ENCODE measurements at regions of chr14 and their contacts with region 1.

Region 1: GRCh38 chr14:70816525-70816924 is 7.2 kb upstream of the MAP3K9 start:
- DNase-seq: no peak
- H3K4me3 ChIP-seq: no peak overlapping the region
- H3K27ac ChIP-seq: no peak overlapping the region
- H3K27me3 ChIP-seq: peaks cover 10% of the 10 kb centered on the region
- CTCF ChIP-seq: no peak

Region 2: DNA sequence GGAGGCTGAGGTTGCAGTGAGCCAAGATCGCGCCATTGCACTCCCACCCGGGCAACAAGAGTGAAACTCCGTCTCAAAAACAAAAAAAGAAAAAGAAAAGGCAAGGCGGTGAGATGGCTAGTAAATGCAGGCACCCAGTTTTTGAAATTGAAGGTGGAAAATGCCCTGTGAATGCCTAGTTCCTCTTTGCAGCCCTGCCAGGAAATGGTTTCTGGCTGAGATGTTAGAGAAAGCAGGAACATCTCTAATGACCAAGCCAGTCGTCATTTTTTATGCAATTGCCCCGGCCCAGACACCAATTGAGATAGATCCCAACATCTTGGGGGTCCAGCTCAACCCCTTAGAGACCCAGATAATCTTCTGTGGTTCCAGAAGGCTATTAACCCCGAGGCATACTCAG is 644.8 kb before region 1 on chr14:
- CTCF ChIA-PET with region 1: no interaction called
- POLR2A ChIA-PET with region 1: no interaction called
- DNase-seq: no peak
- H3K4me3 ChIP-seq: no peak overlapping the region
- H3K27ac ChIP-seq: no peak overlapping the region
- H3K27me3 ChIP-seq: no peaks in the 10 kb centered on the region
- CTCF ChIP-seq: no peak

Region 3: DNA sequence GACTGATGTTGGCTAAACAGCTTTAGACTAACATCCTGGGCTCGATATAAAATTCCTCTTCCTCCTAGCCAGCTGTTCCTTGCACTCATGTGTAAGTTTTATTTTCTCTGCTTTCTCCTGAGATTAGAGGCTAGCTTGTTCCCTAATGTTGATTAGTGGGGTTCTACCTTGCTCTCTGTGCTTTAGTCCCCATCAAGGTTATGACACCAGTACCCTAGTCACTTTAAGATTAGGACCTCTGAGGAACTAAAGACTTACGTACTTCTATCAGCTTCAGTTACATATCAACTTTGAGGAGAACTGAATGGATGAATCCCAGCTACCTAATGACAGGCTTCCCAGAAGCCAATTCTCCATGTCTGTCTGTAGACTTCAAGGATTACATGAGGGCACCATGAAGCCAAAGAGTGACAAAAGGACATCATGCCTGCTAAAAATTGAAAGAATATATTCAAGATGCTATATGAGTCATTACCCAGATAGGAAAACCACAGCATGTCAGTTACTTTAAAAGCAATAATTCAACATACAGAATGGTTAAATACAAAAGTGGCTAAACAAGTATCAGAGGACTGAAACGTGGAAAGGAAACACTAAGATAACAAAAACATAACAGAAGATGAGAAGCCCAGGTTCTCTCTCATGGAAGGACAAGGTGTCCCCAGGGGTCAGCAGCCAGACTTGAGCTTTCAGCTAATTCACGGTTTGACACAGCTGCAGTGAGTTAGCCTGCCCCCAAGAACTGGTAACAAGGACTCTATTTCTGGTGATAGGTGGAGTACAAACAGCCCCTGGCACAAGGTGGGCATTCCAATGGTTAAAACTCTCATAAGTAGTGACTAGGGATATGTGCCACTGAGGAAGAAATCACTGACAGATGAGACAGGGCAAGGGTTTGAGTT is 302.1 kb before region 1 on chr14:
- CTCF ChIA-PET with region 1: no interaction called
- POLR2A ChIA-PET with region 1: no interaction called
- DNase-seq: no peak
- H3K4me3 ChIP-seq: no peak overlapping the region
- H3K27ac ChIP-seq: no peak overlapping the region
- H3K27me3 ChIP-seq: no peaks in the 10 kb centered on the region
- CTCF ChIP-seq: no peak

Region 4: GRCh38 chr14:70897464-70897863 is 80.9 kb after region 1 on chr14:
- CTCF ChIA-PET with region 1: interaction called, 15 read pairs
- POLR2A ChIA-PET with region 1: no interaction called
- DNase-seq: peak; percentile 67
- H3K4me3 ChIP-seq: peak overlapping the region; percentile 14; the same call in 1 of the 2 replicates
- H3K27ac ChIP-seq: peak overlapping the region; percentile 73
- H3K27me3 ChIP-seq: no peaks in the 10 kb centered on the region
- CTCF ChIP-seq: no peak

Region 5: GRCh38 chr14:70955543-70956480 is 139.3 kb after region 1 on chr14:
- CTCF ChIA-PET with region 1: interaction called, 25 read pairs
- POLR2A ChIA-PET with region 1: no interaction called
- DNase-seq: peak; percentile 7
- H3K4me3 ChIP-seq: no peak overlapping the region
- H3K27ac ChIP-seq: no peak overlapping the region
- H3K27me3 ChIP-seq: no peaks in the 10 kb centered on the region
- CTCF ChIP-seq: peak; percentile 78

Region 6: DNA sequence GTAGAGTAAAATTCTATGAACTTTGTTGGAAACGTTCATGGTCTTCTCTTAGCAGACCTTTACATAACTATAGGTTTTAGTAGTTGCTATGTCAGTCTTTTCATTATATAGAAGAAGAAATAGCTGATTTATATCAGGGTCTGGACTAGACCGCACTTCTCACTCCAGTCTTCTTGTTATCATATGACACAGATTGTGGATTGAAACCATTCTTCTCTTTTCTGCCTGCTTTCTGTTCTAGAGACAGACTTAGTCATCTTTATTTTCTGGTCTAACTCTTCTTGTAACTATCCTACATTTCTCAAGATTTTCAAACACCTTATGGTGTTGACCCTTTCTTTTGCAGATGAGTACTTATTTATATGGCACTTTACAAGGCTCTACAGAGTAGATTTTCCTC is 146.4 kb after region 1 on chr14:
- CTCF ChIA-PET with region 1: interaction called, 15 read pairs
- POLR2A ChIA-PET with region 1: no interaction called
- DNase-seq: no peak
- H3K4me3 ChIP-seq: no peak overlapping the region
- H3K27ac ChIP-seq: no peak overlapping the region
- H3K27me3 ChIP-seq: no peaks in the 10 kb centered on the region
- CTCF ChIP-seq: no peak

Region 7: DNA sequence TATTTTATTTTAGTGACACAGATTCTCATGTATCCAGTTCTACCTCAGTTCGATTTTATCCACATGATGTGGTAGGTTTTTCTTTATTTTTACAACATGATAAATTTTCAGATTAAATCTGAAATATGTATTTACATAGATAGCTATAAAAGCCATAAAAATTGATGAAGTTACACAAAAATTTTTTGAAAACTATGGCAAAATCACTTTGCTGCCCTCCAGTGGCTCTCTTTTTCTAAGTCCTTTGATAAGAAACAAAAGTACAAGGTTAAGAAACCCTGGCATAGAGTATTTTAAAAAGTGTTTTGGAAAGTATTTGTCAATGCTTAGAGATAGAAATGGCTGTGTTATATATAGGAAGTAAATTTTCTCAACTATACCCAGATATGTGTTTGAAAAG is 195.0 kb after region 1 on chr14:
- CTCF ChIA-PET with region 1: interaction called, 19 read pairs
- POLR2A ChIA-PET with region 1: no interaction called
- DNase-seq: no peak
- H3K4me3 ChIP-seq: no peak overlapping the region
- H3K27ac ChIP-seq: no peak overlapping the region
- H3K27me3 ChIP-seq: no peaks in the 10 kb centered on the region
- CTCF ChIP-seq: peak; percentile 42; the same call in 1 of the 2 replicates

Measured in AG04450 (cell line).